ENCODE measurements at regions of chr17 and their contacts with region 1.

Region 1: DNA sequence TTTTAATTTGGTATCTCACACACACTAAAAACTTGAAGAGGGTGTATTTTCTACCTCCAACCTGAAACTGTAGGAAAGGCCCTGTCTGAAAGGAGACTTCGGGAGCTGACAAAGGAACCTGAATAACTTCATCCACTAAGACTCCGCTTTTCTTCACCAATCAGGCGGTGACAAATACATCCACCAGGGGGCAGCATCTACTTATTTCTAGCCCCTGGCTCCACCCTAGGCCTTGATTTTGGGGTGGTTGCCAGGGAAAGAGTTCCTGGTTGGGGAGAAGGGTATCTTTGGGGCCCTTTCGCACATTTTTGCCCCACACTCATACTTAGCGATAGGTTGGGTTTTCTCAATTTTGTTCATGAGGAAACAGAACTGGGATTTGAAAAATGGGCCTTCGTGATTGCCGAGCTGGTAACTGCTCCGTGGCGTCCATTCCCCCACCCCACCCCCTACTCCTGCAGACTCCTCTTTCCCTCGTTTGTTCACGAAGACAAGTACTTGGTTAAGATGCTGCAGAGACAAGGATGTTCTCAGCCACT is 4.8 kb upstream of the ARL4D start:
- DNase-seq: peak; percentile 95
- ATAC-seq: peak; percentile 61
- H3K4me3 Mint-ChIP-seq: no peak overlapping the region
- H3K27ac Mint-ChIP-seq: peak overlapping the region; percentile 10
- H3K4me1 Mint-ChIP-seq: peaks cover 47% of the 10 kb centered on the region
- H3K27me3 Mint-ChIP-seq: no peaks in the 10 kb centered on the region

Region 2: GRCh38 chr17:43406676-43407645 is 12.9 kb after region 1 on chr17:
- CTCF ChIA-PET with region 1: interaction called, 25 read pairs
- POLR2A ChIA-PET with region 1: interaction called, 6 read pairs
- DNase-seq: no peak
- ATAC-seq: no peak
- H3K4me3 Mint-ChIP-seq: no peak overlapping the region
- H3K27ac Mint-ChIP-seq: no peak overlapping the region
- H3K4me1 Mint-ChIP-seq: no peaks in the 10 kb centered on the region
- H3K27me3 Mint-ChIP-seq: peaks cover 7% of the 10 kb centered on the region

Region 3: GRCh38 chr17:43428524-43428923 is 34.5 kb after region 1 on chr17:
- CTCF ChIA-PET with region 1: interaction called, 13 read pairs
- POLR2A ChIA-PET with region 1: no interaction called
- DNase-seq: no peak
- ATAC-seq: no peak
- H3K4me3 Mint-ChIP-seq: no peak overlapping the region
- H3K27ac Mint-ChIP-seq: no peak overlapping the region
- H3K4me1 Mint-ChIP-seq: no peaks in the 10 kb centered on the region
- H3K27me3 Mint-ChIP-seq: peaks cover 18% of the 10 kb centered on the region

Region 4: GRCh38 chr17:43456661-43457361 is 62.8 kb after region 1 on chr17:
- CTCF ChIA-PET with region 1: interaction called, 12 read pairs
- POLR2A ChIA-PET with region 1: no interaction called
- DNase-seq: no peak
- ATAC-seq: no peak
- H3K4me3 Mint-ChIP-seq: no peak overlapping the region
- H3K27ac Mint-ChIP-seq: no peak overlapping the region
- H3K4me1 Mint-ChIP-seq: peaks cover 8% of the 10 kb centered on the region
- H3K27me3 Mint-ChIP-seq: peaks cover 11% of the 10 kb centered on the region

Region 5: DNA sequence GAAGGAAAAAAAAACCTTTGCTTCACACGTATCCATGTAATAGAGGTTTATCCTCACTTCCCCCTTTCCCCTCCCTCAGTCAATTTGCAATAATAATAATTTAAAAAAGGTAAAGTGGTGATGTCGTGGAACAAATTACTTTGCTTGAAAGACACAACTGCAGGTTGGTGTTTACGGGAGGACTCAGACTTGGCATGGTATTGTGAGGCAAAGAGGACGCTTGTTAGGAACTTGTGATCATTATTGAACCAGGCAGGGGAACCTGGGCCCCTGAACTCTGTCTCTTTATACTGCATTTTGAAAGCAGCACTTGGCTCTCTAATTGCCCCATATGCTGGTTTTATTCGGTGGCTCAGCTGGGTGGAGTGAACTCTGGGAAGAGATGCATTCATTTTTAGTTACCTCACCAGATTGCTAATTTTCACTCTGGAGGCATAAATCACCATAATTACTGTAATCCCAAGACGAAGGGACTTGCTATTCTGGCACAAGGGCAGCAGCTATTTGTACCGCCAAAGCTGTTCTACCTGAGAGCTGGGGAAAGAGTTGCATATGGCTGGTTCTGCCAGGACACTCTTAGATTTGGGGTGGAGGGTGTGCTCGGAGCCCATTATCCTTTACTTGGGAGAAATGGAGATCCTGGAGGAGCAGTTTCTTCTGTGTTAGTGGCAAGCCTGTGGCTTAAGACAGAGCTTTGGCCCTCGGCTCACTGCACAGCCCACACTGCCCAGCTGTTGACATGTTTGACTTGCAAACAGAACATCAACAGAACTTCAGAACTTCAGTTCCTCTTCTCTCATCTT is 84.0 kb after region 1 on chr17:
- CTCF ChIA-PET with region 1: interaction called, 393 read pairs
- POLR2A ChIA-PET with region 1: interaction called, 43 read pairs
- DNase-seq: no peak
- ATAC-seq: no peak
- H3K4me3 Mint-ChIP-seq: no peak overlapping the region
- H3K27ac Mint-ChIP-seq: no peak overlapping the region
- H3K4me1 Mint-ChIP-seq: peaks cover 2% of the 10 kb centered on the region
- H3K27me3 Mint-ChIP-seq: peaks cover 3% of the 10 kb centered on the region

Measured in activated CD8-positive, alpha-beta T cell treated with anti-CD3 and anti-CD28 coated beads, Interleukin-2, amount 10 ng/mL, durations not matched to agents 7 days and 5 days (primary cell).